Right lobe of liver (tissue), 6 donors: ENCODE measurements at regions of chr16 and their contacts with region 1.

Region 1: DNA sequence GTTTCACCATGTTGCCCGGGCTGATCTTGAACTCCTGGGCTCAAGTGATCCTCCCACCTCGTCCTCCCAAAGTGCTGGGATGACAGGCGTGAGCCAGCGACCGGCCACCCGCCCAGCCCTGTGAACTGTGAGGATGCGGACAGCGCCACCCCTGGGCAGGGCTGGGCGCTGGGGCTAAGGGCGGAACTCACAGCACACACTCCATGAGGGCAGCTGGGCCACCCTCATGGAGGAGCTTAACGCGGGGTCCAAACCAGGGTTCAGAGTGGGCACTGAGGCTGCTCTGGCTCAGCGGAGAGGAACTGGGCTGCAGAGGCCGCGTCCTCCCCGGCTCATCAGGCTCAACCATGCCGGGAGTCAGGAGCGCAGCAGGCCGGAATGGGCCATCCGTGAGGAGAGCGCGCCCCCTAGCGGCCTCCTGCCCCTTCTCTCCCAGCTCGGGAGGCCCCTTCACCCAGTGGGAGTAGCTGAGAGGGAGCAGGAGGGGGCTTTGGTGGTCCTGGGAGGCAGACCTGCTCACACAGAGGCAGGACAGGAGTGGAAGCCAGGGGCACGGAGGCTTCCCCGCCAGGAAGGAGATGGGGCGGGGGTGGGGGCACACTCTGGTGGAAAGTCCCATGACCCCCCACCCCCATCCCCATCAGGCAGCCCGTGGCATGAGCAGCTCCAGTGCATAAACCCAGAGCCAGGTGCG is 13.8 kb downstream of the CORO7 start:
- DNase-seq: peak; percentile 82 to 85 (median 85)
- ATAC-seq: peak; percentile 92 to 95 (median 93)
- H3K4me3 ChIP-seq: peak overlapping the region in 1 of 3 donors; percentile 27
- H3K27ac ChIP-seq: no peak overlapping the region
- H3K4me1 ChIP-seq: peaks cover 0 to 4% (median 0%) of the 10 kb centered on the region in 4 donors
- H3K27me3 ChIP-seq: no peaks in the 10 kb centered on the region
- CTCF ChIP-seq: peak; percentile 84 to 91 (median 90)
- POLR2A ChIP-seq: no peak

Region 2: DNA sequence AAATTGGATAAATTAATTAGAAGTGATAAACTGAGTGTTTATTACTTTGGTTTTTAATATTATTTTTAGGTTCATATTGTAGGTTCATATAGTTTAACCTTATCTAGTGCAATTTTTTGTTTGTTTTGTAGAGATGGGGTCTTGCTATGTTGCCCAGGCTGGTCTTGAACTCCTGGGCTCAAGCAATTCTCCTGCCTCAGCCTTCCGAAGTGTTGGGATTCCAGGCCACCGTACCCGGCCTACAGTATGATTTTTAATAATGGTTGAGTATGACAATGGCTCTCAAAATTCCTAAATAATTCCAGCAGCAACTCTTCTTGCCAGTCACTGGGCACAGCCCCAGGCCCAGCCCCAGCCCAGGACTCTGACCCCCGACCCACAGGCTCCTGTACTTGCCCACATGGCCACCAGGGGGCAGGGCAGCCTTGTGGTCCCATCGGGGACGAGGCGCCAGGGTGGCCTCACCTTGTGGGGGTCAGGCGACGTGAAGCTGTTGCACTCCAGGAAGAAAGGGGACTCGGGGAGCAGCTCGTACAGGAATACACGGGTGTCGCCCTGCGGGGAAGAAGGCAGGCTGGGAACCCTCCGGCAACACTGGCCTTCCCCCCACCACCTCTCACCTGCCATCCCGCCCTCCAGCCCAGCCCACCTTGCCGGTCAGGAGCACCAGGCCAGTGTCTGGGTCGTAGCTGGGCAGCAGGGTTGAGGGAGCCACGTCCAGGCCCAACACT is 43.6 kb before region 1 on chr16:
- intact Hi-C with region 1: loop called (anchors 2 kb)
- DNase-seq: peak; percentile 71 to 78 (median 78)
- ATAC-seq: peak; percentile 65 to 81 (median 78)
- H3K4me3 ChIP-seq: no peak overlapping the region
- H3K27ac ChIP-seq: no peak overlapping the region
- H3K4me1 ChIP-seq: no peaks in the 10 kb centered on the region
- H3K27me3 ChIP-seq: no peaks in the 10 kb centered on the region
- CTCF ChIP-seq: peak; percentile 91 to 97 (median 94)
- POLR2A ChIP-seq: no peak

Region 3: DNA sequence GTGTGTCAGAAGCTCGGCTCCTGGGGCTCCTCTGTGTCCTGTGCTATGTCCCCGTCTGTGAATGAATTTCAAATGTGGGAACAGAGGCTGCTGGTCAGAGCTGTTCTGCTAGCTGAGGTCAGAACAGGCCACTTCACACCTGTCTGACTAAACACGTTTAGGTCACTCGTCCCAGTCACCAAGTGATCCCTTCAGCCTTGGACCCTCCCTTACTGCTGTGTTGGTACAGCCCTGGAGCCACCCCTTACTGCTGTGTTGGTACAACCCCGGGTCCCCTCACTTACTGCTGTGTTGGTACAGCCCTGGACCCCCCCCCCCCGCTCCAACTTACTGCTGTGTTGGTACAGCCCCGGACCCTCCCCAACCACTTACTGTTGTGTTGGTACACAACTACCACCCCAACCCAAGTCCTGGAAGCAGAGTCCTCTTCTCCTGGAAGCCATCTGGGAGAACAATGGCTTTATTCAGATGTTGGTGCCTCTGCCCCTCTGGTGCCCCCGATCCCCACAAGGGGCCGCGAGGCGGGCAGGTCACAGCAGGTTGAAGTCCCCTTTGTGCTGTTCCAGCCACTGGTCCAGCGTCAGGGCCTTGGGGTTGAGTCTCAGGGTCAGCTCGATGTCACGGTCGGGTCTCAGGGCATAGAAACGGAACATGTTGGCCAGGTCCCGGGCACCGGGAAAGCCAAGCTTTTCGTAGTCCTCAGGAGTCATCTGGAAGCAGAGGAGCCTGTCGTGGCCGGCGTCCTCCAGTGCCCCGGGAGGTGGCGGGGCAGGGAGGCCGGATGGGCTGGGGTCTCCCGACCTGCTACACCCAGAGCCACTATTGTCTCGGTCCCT is 58.9 kb after region 1 on chr16:
- intact Hi-C with region 1: no loop called
- DNase-seq: no peak
- ATAC-seq: peak in 1 of 4 donors; percentile 6
- H3K4me3 ChIP-seq: no peak overlapping the region
- H3K27ac ChIP-seq: no peak overlapping the region
- H3K4me1 ChIP-seq: peaks cover 2 to 23% (median 8%) of the 10 kb centered on the region in 4 donors
- H3K27me3 ChIP-seq: no peaks in the 10 kb centered on the region
- CTCF ChIP-seq: no peak
- POLR2A ChIP-seq: no peak